PC-9 (cell line): ENCODE measurements at regions of chr12 and their contacts with region 1.

Region 1: GRCh38 chr12:122204167-122205062 is 906 bp downstream of the B3GNT4 start:
- DNase-seq: no peak
- H3K4me3 ChIP-seq: peak overlapping the region; percentile 57; the same call in 1 of the 2 replicates
- H3K27ac ChIP-seq: no peak overlapping the region
- H3K4me1 ChIP-seq: peaks cover 6% of the 10 kb centered on the region; the same call in 1 of the 2 replicates
- H3K27me3 ChIP-seq: no peaks in the 10 kb centered on the region
- CTCF ChIP-seq: no peak

Region 2: DNA sequence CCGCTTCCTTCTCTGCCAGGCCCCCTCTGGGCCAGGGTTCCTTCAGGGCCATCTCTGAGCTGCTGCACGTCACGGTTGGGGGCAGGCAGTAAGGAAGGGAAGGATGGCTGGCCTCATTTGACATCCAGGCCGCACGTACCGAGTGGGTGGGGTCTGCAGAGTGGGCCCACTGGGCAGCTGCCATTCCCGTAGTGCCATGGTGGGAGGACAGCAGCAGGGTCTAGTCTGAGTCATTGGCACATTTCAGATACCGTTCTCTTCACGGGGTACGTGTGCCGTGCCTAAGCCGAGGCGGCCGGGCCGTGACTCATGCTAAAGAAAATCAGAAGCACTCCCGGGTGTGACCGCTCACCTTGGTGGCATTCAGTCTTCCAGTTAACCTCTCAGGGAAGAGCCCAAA is 74.3 kb before region 1 on chr12:
- CTCF ChIA-PET with region 1: no interaction called
- POLR2A ChIA-PET with region 1: no interaction called
- intact Hi-C with region 1: loop called (anchors 2 kb)
- DNase-seq: peak; percentile 72 to 74
- H3K4me3 ChIP-seq: no peak overlapping the region
- H3K27ac ChIP-seq: peak overlapping the region; percentile 40; the same call in 1 of the 2 replicates
- H3K4me1 ChIP-seq: peaks cover 14% of the 10 kb centered on the region
- H3K27me3 ChIP-seq: no peaks in the 10 kb centered on the region
- CTCF ChIP-seq: no peak

Region 3: GRCh38 chr12:122159882-122160281 is 44.5 kb before region 1 on chr12:
- CTCF ChIA-PET with region 1: interaction called, 13 read pairs
- POLR2A ChIA-PET with region 1: no interaction called
- intact Hi-C with region 1: no loop called
- DNase-seq: no peak
- H3K4me3 ChIP-seq: no peak overlapping the region
- H3K27ac ChIP-seq: no peak overlapping the region
- H3K4me1 ChIP-seq: no peaks in the 10 kb centered on the region
- H3K27me3 ChIP-seq: no peaks in the 10 kb centered on the region
- CTCF ChIP-seq: no peak